CD8-positive, alpha-beta T cell (primary cell): ENCODE measurements at regions of chr1 and their contacts with region 1.

Region 1: GRCh38 chr1:167474191-167474716 is 44.1 kb downstream of the CD247 start:
- DNase-seq: peak in 6 of 9 experiments; percentile 43 to 76 (median 60)
- ATAC-seq: peak; percentile 82
- H3K4me3 ChIP-seq: peak overlapping the region; percentile 5 to 15
- H3K4me3 Mint-ChIP-seq: peak overlapping the region; percentile 78
- H3K27ac ChIP-seq: peak overlapping the region in 1 of 2 experiments; percentile 76
- H3K27ac Mint-ChIP-seq: peak overlapping the region; percentile 91
- H3K4me1 ChIP-seq: peaks cover 72% of the 10 kb centered on the region
- H3K4me1 Mint-ChIP-seq: peaks cover 91% of the 10 kb centered on the region
- H3K27me3 ChIP-seq: no peaks in the 10 kb centered on the region
- H3K27me3 Mint-ChIP-seq: no peaks in the 10 kb centered on the region
- CTCF ChIP-seq: no peak

Region 2: GRCh38 chr1:166843769-166844596 is 630.3 kb before region 1 on chr1:
- CTCF ChIA-PET with region 1: no interaction called
- POLR2A ChIA-PET with region 1: no interaction called
- intact Hi-C with region 1: no loop called
- DNase-seq: no peak
- ATAC-seq: no peak
- H3K4me3 ChIP-seq: no peak overlapping the region
- H3K4me3 Mint-ChIP-seq: no peak overlapping the region
- H3K27ac ChIP-seq: no peak overlapping the region
- H3K27ac Mint-ChIP-seq: peak overlapping the region; percentile 72
- H3K4me1 ChIP-seq: peaks cover 20% of the 10 kb centered on the region
- H3K4me1 Mint-ChIP-seq: peaks cover 60% of the 10 kb centered on the region
- H3K27me3 ChIP-seq: no peaks in the 10 kb centered on the region
- H3K27me3 Mint-ChIP-seq: no peaks in the 10 kb centered on the region
- CTCF ChIP-seq: no peak

Region 3: DNA sequence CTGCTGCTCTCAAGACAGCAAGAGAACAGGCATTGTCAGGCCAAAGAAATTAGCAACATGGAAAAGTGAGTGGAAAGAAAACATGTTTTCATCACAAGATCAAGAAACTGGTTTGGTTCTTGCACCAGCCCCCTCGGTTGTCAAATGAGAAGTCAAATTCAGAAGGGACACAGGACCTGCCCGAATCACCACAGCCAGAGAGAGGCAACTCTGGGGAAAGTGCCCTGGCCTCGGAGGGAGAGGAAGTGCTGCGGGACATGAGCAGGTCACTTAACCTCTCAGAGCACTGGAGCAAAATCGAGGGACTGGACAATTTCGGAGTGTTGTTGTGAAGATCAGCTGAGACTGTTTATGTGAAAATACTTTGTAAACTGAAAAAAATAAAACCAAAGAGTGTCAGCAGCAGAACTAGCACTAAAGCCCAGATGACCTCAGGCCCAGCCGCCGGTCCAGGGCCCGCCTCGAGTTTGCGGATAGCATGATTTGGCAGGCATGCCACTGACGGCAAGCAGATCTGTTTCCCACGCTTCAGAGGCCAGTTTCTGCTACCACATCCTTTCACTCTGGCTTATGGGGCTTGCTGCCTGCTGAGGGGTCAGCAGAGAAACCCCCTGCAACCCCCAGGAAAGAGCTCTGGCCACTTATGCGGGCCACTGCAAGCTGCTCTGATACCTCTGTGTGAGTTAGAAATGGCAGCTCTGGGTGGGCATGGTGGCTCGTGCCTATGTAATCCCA is 12.0 kb after region 1 on chr1:
- CTCF ChIA-PET with region 1: interaction called, 5 read pairs
- POLR2A ChIA-PET with region 1: interaction called, 4 read pairs
- intact Hi-C with region 1: loop called in 1 of 2 experiments (anchors 1 kb)
- DNase-seq: peak in 4 of 9 experiments; percentile 23 to 71 (median 52)
- ATAC-seq: no peak
- H3K4me3 ChIP-seq: peak overlapping the region in 1 of 2 experiments; percentile 13
- H3K4me3 Mint-ChIP-seq: peak overlapping the region; percentile 78
- H3K27ac ChIP-seq: peak overlapping the region; percentile 36 to 77
- H3K27ac Mint-ChIP-seq: peak overlapping the region; percentile 94
- H3K4me1 ChIP-seq: peaks cover 96% of the 10 kb centered on the region
- H3K4me1 Mint-ChIP-seq: peaks cover 93% of the 10 kb centered on the region
- H3K27me3 ChIP-seq: no peaks in the 10 kb centered on the region
- H3K27me3 Mint-ChIP-seq: no peaks in the 10 kb centered on the region
- CTCF ChIP-seq: no peak